Mucosa of descending colon (tissue), 3 donors: ENCODE measurements at regions of chr6 and their contacts with region 1.

Region 1: GRCh38 chr6:44649365-44650025 is 262.0 kb downstream of the CDC5L start:
- DNase-seq: no peak
- ATAC-seq: no peak
- H3K4me3 ChIP-seq: no peak overlapping the region
- H3K4me1 ChIP-seq: no peaks in the 10 kb centered on the region
- CTCF ChIP-seq: no peak

Region 2: DNA sequence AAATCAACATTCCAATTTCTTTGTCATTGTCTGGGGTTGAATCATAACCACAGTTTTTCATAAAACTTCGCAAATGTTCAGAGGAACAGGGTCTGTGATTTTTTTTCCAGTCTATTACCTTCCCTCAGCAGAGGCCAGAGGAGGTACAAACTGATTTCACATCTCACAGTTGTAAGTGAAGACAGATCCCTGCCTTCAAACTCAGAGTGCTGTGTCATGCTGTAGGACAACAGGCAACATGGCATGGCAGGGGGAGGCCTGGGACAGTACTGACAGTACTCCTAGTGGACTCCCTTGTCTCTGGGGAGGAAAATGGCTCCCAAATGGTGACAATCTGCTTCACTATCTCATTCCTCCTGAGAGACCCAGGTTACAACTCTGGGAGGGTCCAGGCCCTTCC is 46.6 kb after region 1 on chr6:
- intact Hi-C with region 1: no loop called
- DNase-seq: no peak
- ATAC-seq: no peak
- H3K4me3 ChIP-seq: no peak overlapping the region
- H3K4me1 ChIP-seq: no peaks in the 10 kb centered on the region
- CTCF ChIP-seq: no peak

Region 3: GRCh38 chr6:45929421-45930361 is 1280.2 kb after region 1 on chr6:
- intact Hi-C with region 1: loop called (anchors 5 to 10 kb)
- DNase-seq: no peak
- ATAC-seq: no peak
- H3K4me3 ChIP-seq: no peak overlapping the region
- H3K4me1 ChIP-seq: peaks cover 11% of the 10 kb centered on the region
- CTCF ChIP-seq: no peak